HCT116 (cell line): ENCODE measurements at regions of chrX and their contacts with region 1.

Region 1: GRCh38 chrX:33589316-33589715 is 378.0 kb upstream of the DMD start:
- DNase-seq: no peak
- ATAC-seq: no peak
- H3K4me3 ChIP-seq: no peak overlapping the region
- H3K27ac ChIP-seq: no peak overlapping the region
- H3K4me1 ChIP-seq: no peaks in the 10 kb centered on the region
- H3K27me3 ChIP-seq: no peaks in the 10 kb centered on the region
- CTCF ChIP-seq: no peak
- POLR2A ChIP-seq: no peak
- RAD21 ChIP-seq: no peak

Region 2: GRCh38 chrX:33183361-33183760 is 406.0 kb before region 1 on chrX:
- CTCF ChIA-PET with region 1: no interaction called
- POLR2A ChIA-PET with region 1: no interaction called
- RAD21 ChIA-PET with region 1: no interaction called
- intact Hi-C with region 1: no loop called
- DNase-seq: no peak
- ATAC-seq: no peak
- H3K4me3 ChIP-seq: no peak overlapping the region
- H3K27ac ChIP-seq: no peak overlapping the region
- H3K4me1 ChIP-seq: no peaks in the 10 kb centered on the region
- H3K27me3 ChIP-seq: no peaks in the 10 kb centered on the region
- CTCF ChIP-seq: no peak
- POLR2A ChIP-seq: no peak
- RAD21 ChIP-seq: no peak

Region 3: DNA sequence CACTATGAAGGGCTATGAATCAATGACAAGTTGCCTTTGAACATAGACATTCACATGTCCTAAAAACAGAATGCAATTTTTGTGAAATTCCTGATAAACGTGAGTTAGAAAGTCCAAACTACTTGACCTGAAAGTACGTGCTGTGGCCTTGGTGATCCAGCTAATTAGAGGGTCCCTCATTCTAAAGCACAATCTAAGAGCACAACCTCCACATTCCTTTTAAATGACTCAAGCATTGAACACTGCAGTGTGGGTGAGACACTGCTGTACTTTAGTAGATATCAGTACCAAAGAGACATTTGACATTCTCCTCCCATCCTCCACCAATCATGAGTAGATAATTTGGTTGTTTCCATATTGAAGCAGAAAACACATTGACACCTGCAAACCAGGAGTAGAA is 1426.7 kb after region 1 on chrX:
- CTCF ChIA-PET with region 1: no interaction called
- POLR2A ChIA-PET with region 1: no interaction called
- RAD21 ChIA-PET with region 1: no interaction called
- intact Hi-C with region 1: loop called (anchors 10 kb)
- DNase-seq: no peak
- ATAC-seq: no peak
- H3K4me3 ChIP-seq: no peak overlapping the region
- H3K27ac ChIP-seq: no peak overlapping the region
- H3K4me1 ChIP-seq: no peaks in the 10 kb centered on the region
- H3K27me3 ChIP-seq: no peaks in the 10 kb centered on the region
- CTCF ChIP-seq: no peak
- POLR2A ChIP-seq: no peak
- RAD21 ChIP-seq: no peak